Caco-2 (cell line): ENCODE measurements at regions of chr19 and their contacts with region 1.

Region 1: GRCh38 chr19:12983542-12984142 is 11.6 kb upstream of the NFIX start:
- DNase-seq: peak in 1 of 2 experiments; percentile 74
- H3K4me3 ChIP-seq: no peak overlapping the region
- H3K4me3 Mint-ChIP-seq: no peak overlapping the region
- H3K27ac Mint-ChIP-seq: no peak overlapping the region
- H3K4me1 ChIP-seq: peaks cover 3% of the 10 kb centered on the region; the same call in 1 of the 2 replicates
- H3K4me1 Mint-ChIP-seq: no peaks in the 10 kb centered on the region
- H3K27me3 ChIP-seq: no peaks in the 10 kb centered on the region
- H3K27me3 Mint-ChIP-seq: peaks cover 2% of the 10 kb centered on the region
- CTCF ChIP-seq: peak; percentile 56 to 87

Region 2: DNA sequence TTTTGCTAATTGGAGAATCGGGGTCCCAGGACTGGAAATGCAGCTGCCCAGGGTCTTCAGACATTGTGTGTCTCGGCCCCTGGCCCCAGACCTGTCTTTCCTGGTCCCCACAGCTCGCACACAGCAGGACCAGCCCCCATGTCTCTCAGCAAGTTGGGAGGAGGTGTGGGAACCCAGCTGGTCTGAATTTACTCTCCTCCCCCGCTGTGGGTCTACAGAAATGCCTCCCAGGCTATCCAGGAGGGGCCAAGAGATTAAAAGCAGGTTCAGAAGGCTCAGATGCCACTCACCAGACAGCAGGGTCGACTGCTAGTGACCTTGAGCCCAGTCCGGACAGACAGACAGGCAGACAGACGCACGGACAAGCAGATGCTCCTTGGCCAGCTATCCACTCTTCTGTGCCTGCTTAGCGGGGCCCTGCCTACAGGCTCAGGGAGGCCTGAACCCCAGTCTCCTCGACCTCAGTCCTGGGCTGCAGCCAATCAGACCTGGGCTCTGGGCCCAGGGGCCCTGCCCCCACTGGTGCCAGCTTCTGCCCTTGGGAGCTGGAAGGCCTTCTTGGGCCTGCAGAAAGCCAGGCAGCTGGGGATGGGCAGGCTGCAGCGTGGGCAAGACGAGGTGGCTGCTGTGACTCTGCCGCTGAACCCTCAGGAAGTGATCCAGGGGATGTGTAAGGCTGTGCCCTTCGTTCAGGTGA is 14.2 kb before region 1 on chr19 and contains the start of gene DAND5:
- CTCF ChIA-PET with region 1: no interaction called
- POLR2A ChIA-PET with region 1: no interaction called
- intact Hi-C with region 1: no loop called
- DNase-seq: no peak
- H3K4me3 ChIP-seq: no peak within 1 kb of the TSS
- H3K4me3 Mint-ChIP-seq: no peak within 1 kb of the TSS
- H3K27ac Mint-ChIP-seq: no peak within 1 kb of the TSS
- H3K4me1 ChIP-seq: no peaks in the 10 kb centered on the region
- H3K4me1 Mint-ChIP-seq: peaks cover 7% of the 10 kb centered on the region
- H3K27me3 ChIP-seq: no peaks in the 10 kb centered on the region
- H3K27me3 Mint-ChIP-seq: no peaks in the 10 kb centered on the region
- CTCF ChIP-seq: no peak
- total RNA-seq, gene DAND5: not detected in 2 replicates

Region 3: GRCh38 chr19:13012690-13013608 is 29.3 kb after region 1 on chr19:
- CTCF ChIA-PET with region 1: no interaction called
- POLR2A ChIA-PET with region 1: no interaction called
- intact Hi-C with region 1: loop called (anchors 1 kb)
- DNase-seq: no peak
- H3K4me3 ChIP-seq: no peak overlapping the region
- H3K4me3 Mint-ChIP-seq: no peak overlapping the region
- H3K27ac Mint-ChIP-seq: no peak overlapping the region
- H3K4me1 ChIP-seq: peaks cover 8% of the 10 kb centered on the region; the same call in 1 of the 2 replicates
- H3K4me1 Mint-ChIP-seq: peaks cover 5% of the 10 kb centered on the region
- H3K27me3 ChIP-seq: no peaks in the 10 kb centered on the region
- H3K27me3 Mint-ChIP-seq: peaks cover 22% of the 10 kb centered on the region
- CTCF ChIP-seq: no peak

Region 4: DNA sequence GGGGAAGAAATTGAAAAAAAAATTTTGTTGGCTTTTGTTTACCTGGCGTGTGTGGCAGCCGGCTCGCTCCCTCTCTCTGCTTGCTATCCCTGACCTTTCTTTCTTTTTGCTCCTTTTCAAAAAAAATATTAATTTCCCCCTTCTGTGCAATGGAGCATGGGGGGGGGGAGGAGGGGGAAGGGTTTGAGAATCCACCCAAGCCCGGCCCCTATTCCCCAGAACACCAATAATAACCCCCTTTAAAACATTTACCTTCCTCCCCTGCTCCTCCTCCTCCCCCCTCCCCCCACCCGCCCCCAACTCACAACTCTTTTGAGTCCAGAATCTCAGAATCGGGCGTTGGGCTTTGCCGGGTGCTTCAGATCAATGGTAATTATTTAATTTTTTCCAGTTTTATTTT is 40.0 kb after region 1 on chr19:
- CTCF ChIA-PET with region 1: no interaction called
- POLR2A ChIA-PET with region 1: no interaction called
- intact Hi-C with region 1: no loop called
- DNase-seq: no peak
- H3K4me3 ChIP-seq: no peak overlapping the region
- H3K4me3 Mint-ChIP-seq: no peak overlapping the region
- H3K27ac Mint-ChIP-seq: no peak overlapping the region
- H3K4me1 ChIP-seq: peaks cover 6% of the 10 kb centered on the region
- H3K4me1 Mint-ChIP-seq: peaks cover 9% of the 10 kb centered on the region
- H3K27me3 ChIP-seq: no peaks in the 10 kb centered on the region
- H3K27me3 Mint-ChIP-seq: peaks cover 21% of the 10 kb centered on the region
- CTCF ChIP-seq: no peak

Region 5: GRCh38 chr19:13033819-13034611 is 50.4 kb after region 1 on chr19:
- CTCF ChIA-PET with region 1: interaction called, 3 read pairs
- POLR2A ChIA-PET with region 1: no interaction called
- intact Hi-C with region 1: loop called (anchors 2 kb)
- DNase-seq: peak in 1 of 2 experiments; percentile 71
- H3K4me3 ChIP-seq: no peak overlapping the region
- H3K4me3 Mint-ChIP-seq: no peak overlapping the region
- H3K27ac Mint-ChIP-seq: no peak overlapping the region
- H3K4me1 ChIP-seq: peaks cover 19% of the 10 kb centered on the region
- H3K4me1 Mint-ChIP-seq: peaks cover 25% of the 10 kb centered on the region
- H3K27me3 ChIP-seq: no peaks in the 10 kb centered on the region; the same call in none of the 2 replicates
- H3K27me3 Mint-ChIP-seq: peaks cover 2% of the 10 kb centered on the region
- CTCF ChIP-seq: peak; percentile 51 to 81

Region 6: GRCh38 chr19:13060964-13061927 is 77.6 kb after region 1 on chr19:
- CTCF ChIA-PET with region 1: interaction called, 84 read pairs
- POLR2A ChIA-PET with region 1: no interaction called
- intact Hi-C with region 1: no loop called
- DNase-seq: peak; percentile 56 to 82
- H3K4me3 ChIP-seq: peak overlapping the region; percentile 21
- H3K4me3 Mint-ChIP-seq: peak overlapping the region; percentile 37
- H3K27ac Mint-ChIP-seq: no peak overlapping the region
- H3K4me1 ChIP-seq: no peaks in the 10 kb centered on the region
- H3K4me1 Mint-ChIP-seq: no peaks in the 10 kb centered on the region
- H3K27me3 ChIP-seq: peaks cover 3% of the 10 kb centered on the region
- H3K27me3 Mint-ChIP-seq: peaks cover 19% of the 10 kb centered on the region
- CTCF ChIP-seq: peak; percentile 83 to 91

Region 7: DNA sequence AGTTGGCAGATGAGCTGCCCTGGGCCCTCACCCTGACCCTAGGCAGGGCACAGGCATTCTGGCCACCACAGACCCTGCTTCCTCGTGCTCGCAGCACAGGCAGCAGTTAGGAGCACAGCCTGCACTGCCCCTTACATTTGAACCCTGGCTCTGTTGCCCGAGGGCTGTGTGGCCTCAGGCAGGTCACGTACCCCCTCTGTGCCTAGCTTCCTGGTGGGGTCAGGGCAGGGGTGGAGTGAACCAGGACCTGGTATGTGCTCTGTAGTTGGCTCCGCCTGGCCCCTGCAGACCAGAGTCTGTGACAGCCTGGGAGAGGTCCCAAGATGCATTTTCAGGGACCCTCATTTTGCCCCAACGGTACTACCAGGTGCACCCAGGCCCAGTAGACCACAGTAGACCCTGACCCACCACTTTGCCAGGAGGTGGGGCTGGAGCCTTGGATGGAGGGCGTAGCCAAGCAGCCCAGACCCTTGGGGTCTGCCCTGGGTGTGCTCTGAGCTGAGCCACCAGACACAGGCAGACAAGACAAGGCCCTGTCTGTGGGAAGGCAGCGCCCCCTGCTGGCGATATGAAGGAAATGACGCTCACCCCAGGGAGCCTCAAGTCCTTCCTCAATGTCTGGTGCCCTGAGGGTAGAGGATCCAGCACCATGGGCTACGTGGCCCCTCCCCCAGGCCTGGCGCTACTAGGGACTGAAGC is 109.9 kb after region 1 on chr19:
- CTCF ChIA-PET with region 1: interaction called, 64 read pairs
- POLR2A ChIA-PET with region 1: no interaction called
- intact Hi-C with region 1: loop called (anchors 1 kb)
- DNase-seq: peak; percentile 68 to 76
- H3K4me3 ChIP-seq: no peak overlapping the region
- H3K4me3 Mint-ChIP-seq: no peak overlapping the region
- H3K27ac Mint-ChIP-seq: no peak overlapping the region
- H3K4me1 ChIP-seq: no peaks in the 10 kb centered on the region
- H3K4me1 Mint-ChIP-seq: peaks cover 11% of the 10 kb centered on the region
- H3K27me3 ChIP-seq: no peaks in the 10 kb centered on the region; the same call in 1 of the 2 replicates
- H3K27me3 Mint-ChIP-seq: peaks cover 10% of the 10 kb centered on the region
- CTCF ChIP-seq: peak; percentile 84 to 92